Cardiac septum (tissue), 1 donor: ENCODE measurements at regions of chr2 and their contacts with region 1.

Region 1: DNA sequence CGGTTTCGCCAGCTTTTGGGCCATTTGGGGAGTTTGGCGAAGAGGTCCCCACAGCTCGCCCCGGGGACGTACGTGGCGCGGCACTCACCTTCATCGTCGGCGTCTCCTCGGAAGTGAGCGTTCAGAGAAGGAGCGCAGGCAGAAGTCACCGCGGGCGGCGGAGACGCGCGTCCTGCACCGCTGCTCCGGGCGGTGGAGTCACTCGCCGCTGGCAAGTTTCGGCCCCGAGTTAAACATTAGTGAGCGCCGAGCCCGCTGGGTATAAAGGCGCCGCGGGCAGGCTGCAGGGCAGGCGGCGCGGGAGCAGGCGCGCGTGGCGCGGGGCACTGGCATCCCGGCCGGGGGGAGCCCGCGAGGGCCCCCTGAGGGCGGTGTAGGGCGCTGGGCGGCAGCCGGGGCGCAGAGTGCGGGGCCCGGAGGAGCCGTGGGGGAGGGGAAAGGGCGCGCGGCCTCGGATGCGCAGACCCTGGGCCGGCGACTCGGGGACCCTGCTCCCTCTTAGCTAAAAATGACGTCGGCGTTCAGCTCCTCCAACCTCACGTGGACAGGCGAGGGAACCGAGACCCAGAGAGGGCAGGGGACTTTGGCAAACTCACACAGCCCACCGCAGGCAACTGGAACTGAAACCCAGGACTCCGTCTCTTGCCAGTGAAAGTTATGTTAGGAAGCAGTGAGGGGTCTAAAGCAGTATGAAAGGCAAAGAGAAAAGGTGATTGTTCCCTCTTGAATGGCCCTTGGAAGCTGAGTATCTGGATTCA is at the start of gene DPP4:
- DNase-seq: no peak
- total RNA-seq, gene DPP4: 3.4 TPM

Region 2: GRCh38 chr2:162002623-162003240 is 71.3 kb before region 1 on chr2:
- intact Hi-C with region 1: no loop called
- DNase-seq: no peak

Region 3: DNA sequence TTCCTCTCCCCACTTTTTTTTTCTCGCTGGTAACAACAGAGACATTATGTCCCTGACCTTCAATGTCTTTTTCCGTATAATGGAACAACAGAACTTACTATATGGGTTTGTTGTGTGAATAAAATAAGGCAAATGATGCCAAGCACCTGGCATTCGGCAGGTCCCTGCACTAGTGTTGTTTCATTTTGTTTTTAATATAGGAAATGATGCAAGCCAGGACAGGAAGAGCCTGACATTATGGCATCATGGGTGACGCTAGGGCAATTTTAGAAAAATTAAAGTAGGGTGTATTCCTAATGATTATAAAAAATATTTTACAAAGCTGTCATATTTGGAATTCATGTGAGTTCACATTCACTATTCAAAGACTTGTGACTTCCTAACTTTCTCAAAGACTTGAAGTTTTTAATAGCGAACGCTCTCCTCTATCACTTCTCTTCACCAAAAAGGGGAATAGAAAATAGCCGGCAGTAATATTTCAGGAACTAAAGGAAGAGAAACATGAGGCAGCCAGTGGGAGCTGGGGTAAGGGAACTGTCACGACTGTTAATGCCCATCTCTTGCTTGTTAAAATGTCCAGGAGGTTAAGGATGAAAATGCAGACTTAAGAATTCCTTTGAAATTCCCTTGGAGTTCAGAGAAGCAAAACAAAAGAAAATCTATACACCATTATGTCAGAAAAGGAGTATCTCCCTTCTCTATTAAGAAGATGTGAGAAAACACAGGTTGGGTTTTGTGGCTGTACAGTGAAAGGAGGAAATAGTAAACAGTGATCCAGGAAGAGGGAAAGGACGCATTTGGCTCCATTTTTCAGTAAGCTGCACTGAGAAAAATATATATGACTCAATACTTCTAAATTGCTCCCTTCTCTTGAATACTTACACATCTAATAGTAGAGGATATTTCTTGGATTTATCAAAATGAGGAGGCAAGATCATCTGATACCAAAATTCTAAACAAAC is 60.3 kb before region 1 on chr2:
- intact Hi-C with region 1: loop called (anchors 5 kb)
- DNase-seq: no peak

Region 4: GRCh38 chr2:162091325-162092007 is 17.4 kb after region 1 on chr2:
- intact Hi-C with region 1: loop called (anchors 2 kb)
- DNase-seq: no peak

Region 5: GRCh38 chr2:162118559-162119031 is 44.5 kb after region 1 on chr2:
- intact Hi-C with region 1: loop called (anchors 5 kb)
- DNase-seq: no peak

Region 6: DNA sequence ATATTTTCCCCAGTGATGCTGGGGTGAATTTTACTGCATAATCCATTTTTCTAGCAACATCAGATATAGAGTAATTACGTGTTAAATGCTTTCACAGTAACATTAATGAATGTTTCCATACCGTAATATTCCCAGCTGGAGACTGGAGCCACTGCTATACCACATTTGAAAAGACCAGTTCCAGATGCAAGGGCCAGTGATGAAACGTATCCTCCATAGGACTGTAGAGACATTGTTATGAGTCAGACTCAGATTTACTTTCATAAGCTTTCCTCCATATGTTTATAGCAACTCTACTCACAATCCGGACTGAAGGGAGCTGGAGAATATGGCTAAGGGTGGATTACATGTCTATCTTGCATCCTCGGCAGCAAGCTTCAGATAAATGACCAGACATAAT is 100.7 kb after region 1 on chr2:
- intact Hi-C with region 1: no loop called
- DNase-seq: no peak